Activated CD4-positive, alpha-beta T cell treated with anti-CD3 and anti-CD28 coated beads, Interleukin-2, amount 10 ng/mL, durations not matched to agents 7 days and 5 days (primary cell): ENCODE measurements at regions of chr15 and their contacts with region 1.

Region 1: DNA sequence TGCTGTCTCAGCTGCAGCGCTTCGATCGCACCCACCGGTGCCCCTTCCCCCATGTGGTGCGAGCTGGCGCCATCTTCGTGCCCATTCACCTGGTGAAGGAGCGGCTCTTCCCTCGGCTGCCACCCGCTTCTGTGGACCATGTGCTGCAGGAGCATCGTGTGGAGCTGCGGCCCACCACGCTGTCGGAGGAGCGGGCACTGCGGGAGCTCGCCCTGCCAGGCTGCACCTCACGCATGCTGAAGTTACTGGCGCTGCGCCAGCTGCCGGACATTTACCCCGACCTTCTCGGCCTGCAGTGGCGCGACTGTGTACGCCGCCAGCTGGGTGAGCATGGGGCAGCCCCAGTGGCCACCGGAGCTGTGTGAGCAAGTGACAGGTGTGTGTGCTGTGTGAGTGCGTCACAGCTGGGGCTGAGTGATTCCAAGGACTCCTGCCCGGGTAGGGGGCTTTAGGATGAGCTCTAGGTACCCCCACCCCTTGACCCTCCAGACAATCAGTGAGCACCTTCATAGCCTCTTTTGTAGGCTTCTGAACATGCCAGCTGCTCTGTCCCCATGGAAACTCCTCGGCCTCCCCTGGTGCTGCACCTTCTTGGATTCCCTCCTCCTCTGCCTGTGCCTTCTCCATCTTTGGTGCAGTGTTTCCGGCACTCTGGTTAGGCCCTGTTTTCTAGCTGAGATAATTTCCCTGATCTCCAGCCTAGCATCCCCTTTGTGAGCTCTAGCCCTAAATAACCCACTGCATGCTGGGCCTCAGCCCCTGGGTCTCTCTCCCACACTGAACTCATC is 7.0 kb downstream of the C15orf39 start:
- DNase-seq: no peak
- H3K4me3 Mint-ChIP-seq: no peak overlapping the region
- H3K27ac Mint-ChIP-seq: no peak overlapping the region
- H3K4me1 Mint-ChIP-seq: peaks cover 35% of the 10 kb centered on the region
- H3K27me3 Mint-ChIP-seq: no peaks in the 10 kb centered on the region

Region 2: DNA sequence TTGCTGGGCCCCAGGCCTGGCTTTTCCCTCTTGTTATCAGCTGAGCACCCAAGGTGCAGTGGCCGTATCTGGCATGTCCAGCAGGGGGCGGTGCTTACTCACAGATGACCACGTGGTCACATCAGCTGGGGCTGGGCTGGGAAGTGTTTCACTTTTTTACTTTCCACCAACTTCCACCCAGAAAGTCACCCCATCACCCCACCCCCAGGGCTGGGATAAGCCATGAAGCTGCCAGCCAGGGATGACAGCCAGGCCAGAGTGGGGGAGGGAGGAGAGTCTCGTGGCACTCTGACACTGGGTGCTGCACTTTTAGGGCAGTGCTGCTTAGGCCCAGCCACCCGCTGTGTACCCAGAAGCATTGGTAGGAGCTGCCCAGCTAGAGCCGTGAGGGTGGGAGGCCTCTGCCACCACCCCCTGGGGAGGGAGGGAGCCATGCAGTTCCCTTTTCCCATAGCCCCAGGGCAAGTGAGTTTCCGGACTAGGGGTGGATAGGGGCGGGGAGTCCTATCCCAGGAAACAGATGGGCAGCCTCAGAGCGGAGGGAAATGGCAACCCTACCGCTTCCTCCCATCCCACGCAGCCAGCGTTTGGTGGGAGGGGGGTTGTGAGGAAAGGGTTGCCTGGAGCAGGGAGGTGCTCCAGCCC is 179.2 kb before region 1 on chr15:
- CTCF ChIA-PET with region 1: interaction called, 34 read pairs
- POLR2A ChIA-PET with region 1: no interaction called
- DNase-seq: peak; percentile 92
- H3K4me3 Mint-ChIP-seq: no peak overlapping the region
- H3K27ac Mint-ChIP-seq: no peak overlapping the region
- H3K4me1 Mint-ChIP-seq: peaks cover 54% of the 10 kb centered on the region
- H3K27me3 Mint-ChIP-seq: no peaks in the 10 kb centered on the region